ENCODE measurements at regions of chr3 and their contacts with region 1.

Region 1: DNA sequence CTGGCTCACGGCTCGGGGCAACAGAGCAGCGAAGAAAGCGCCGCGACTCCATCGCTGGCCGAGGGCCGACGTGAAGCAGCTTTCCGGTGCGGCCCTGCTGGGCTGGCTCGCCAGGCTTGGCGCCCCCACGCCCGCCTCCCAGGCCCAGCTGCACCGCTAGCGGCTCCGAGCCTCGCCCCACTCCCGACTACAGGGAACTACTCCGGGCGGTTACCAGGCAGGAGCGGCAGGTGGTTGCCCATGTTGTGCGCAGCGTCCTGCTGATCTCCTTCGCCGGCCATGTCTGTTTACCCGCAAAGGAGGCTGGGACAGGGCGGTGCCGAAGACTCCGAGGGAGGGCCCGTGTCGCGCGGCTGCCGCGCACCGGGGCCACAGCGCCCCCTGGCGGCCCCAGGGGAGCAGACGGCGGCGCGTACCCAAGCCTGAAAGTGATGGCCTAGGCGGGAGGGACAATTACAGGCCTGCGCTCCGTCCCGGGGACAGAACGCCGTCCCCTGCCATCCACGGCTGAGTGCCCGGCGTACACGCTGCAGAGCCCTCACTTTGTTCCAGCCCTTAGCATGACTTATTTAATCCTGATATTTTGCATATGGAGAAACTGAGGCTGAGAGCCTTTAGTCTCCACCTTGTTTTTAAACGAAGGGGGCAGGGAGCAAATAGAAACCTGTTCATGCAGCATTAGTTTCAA is at the start of gene CRBN:
- DNase-seq: peak; percentile 90
- ATAC-seq: peak; percentile 99
- H3K4me3 Mint-ChIP-seq: peak within 1 kb of the TSS; percentile 91
- H3K27ac Mint-ChIP-seq: peak within 1 kb of the TSS; percentile 72
- H3K4me1 Mint-ChIP-seq: peaks cover 40% of the 10 kb centered on the region
- H3K27me3 Mint-ChIP-seq: no peaks in the 10 kb centered on the region
- CTCF ChIP-seq: peak; percentile 51
- total RNA-seq, gene CRBN: 47.8 and 58.2 TPM in 2 replicates

Region 2: DNA sequence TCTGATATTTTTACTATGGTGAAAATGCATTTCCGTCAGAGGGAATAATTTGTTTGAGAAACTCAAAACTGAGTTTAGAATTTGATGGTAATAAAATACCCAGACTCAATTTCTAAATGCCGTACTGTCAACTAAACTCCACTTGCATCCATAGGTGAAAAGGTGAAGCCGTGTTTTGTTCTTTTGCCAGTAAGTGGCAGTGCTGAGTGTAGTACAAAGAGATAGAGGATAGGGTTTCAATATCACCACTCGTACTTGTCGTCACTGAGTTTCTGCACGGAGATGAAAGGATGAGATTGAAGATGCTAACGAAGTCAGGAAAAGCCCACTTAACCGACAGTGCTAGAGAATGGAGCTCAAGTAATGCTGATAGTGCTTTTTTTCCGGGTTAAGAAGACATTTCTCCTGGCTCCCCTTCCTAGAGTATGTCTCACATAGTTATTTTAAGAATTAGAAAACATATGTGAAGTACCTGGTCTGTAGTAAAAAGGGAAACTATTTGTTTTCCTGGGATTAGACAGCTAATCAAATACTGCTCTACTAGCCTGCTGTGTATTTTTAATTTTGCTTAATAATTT is 414.5 kb before region 1 on chr3:
- CTCF ChIA-PET with region 1: no interaction called
- POLR2A ChIA-PET with region 1: no interaction called
- intact Hi-C with region 1: loop called (anchors 5 kb)
- DNase-seq: no peak
- ATAC-seq: no peak
- H3K4me3 Mint-ChIP-seq: no peak overlapping the region
- H3K27ac Mint-ChIP-seq: no peak overlapping the region
- H3K4me1 Mint-ChIP-seq: no peaks in the 10 kb centered on the region
- H3K27me3 Mint-ChIP-seq: no peaks in the 10 kb centered on the region
- CTCF ChIP-seq: no peak

Region 3: GRCh38 chr3:4303187-4304123 is 1123.9 kb after region 1 on chr3 and contains the start of gene SETMAR:
- CTCF ChIA-PET with region 1: no interaction called
- POLR2A ChIA-PET with region 1: no interaction called
- intact Hi-C with region 1: loop called (anchors 1 kb)
- DNase-seq: peak; percentile 77
- ATAC-seq: peak; percentile 96
- H3K4me3 Mint-ChIP-seq: peak within 1 kb of the TSS; percentile 98
- H3K27ac Mint-ChIP-seq: peak within 1 kb of the TSS; percentile 98
- H3K4me1 Mint-ChIP-seq: peaks cover 11% of the 10 kb centered on the region
- H3K27me3 Mint-ChIP-seq: no peaks in the 10 kb centered on the region
- CTCF ChIP-seq: no peak
- total RNA-seq, gene SETMAR: 10.3 and 11.4 TPM in 2 replicates